GM18951 (cell line): ENCODE measurements at regions of chr5 and their contacts with region 1.

Region 1: GRCh38 chr5:41851116-41851515 is 19.1 kb downstream of the OXCT1 start:
- POLR2A ChIP-seq: no peak

Region 2: DNA sequence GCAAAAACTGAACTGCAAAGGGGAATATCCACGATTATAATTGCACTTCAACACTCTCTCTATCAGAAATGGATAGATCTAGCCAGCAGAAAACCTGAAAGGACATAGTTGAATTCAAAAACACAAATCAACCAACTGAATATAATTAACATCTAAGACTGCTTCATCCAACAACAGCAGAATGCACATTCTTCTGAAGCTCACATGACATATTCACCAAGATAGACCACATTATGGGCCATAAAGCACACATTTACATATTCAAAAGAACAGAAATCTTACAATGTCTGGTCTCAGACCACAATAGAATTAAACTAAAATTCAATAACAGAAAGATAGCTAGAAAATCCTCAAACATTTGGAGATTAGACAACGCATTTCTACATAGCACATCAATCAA is 192.3 kb after region 1 on chr5:
- in situ Hi-C with region 1: loop called (anchors 5 kb)
- POLR2A ChIP-seq: no peak